ENCODE measurements at regions of chr1 and their contacts with region 1.

Region 1: DNA sequence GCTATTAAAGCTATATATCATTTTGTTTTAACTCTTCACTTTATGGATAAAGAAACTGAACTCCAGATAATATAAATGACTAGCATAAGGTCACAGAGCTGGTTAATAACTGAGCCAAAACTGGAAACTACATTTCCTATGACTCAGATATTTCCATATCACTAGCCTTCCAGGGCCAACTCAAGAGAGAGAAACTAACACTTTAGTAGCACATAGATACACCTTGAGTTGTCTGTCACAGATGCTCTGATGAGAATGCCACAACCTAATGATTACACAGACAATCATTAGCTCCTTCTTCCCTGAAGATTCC is 40.7 kb downstream of the NME7 start:
- DNase-seq: no peak
- H3K4me3 Mint-ChIP-seq: peak overlapping the region; percentile 4
- H3K27ac Mint-ChIP-seq: peak overlapping the region; percentile 13
- H3K4me1 Mint-ChIP-seq: peaks cover 11% of the 10 kb centered on the region
- H3K27me3 Mint-ChIP-seq: no peaks in the 10 kb centered on the region

Region 2: GRCh38 chr1:169161496-169162194 is 165.3 kb before region 1 on chr1:
- intact Hi-C with region 1: loop called (anchors 10 kb)
- DNase-seq: no peak
- H3K4me3 Mint-ChIP-seq: no peak overlapping the region
- H3K27ac Mint-ChIP-seq: no peak overlapping the region
- H3K4me1 Mint-ChIP-seq: peaks cover 7% of the 10 kb centered on the region
- H3K27me3 Mint-ChIP-seq: no peaks in the 10 kb centered on the region

Region 3: DNA sequence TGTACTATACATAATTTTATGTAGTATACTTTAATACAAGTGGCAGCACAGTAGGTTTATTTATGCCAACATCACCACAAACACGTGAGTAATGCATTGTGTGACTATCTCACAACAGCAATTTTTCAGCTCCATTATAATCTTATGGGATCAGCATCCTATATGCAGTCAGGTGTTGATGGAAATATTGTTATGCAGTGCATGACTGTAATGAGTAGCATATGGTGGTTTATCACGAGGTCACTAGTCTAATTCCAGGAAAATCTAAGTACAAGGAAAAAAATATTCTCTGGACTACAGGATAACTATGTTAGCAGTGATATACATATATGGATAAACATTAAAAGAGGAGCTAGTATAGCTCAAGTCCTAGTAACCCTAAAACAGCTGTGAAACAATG is 151.5 kb before region 1 on chr1:
- intact Hi-C with region 1: no loop called
- DNase-seq: no peak
- H3K4me3 Mint-ChIP-seq: no peak overlapping the region
- H3K27ac Mint-ChIP-seq: no peak overlapping the region
- H3K4me1 Mint-ChIP-seq: no peaks in the 10 kb centered on the region
- H3K27me3 Mint-ChIP-seq: no peaks in the 10 kb centered on the region

Region 4: GRCh38 chr1:169312084-169312954 is 14.6 kb before region 1 on chr1:
- intact Hi-C with region 1: loop called (anchors 1 kb)
- DNase-seq: peak; percentile 79
- H3K4me3 Mint-ChIP-seq: no peak overlapping the region
- H3K27ac Mint-ChIP-seq: peak overlapping the region; percentile 55
- H3K4me1 Mint-ChIP-seq: peaks cover 20% of the 10 kb centered on the region
- H3K27me3 Mint-ChIP-seq: no peaks in the 10 kb centered on the region

Measured in activated CD4-positive, alpha-beta T cell treated with anti-CD3 and anti-CD28 coated beads, Interleukin-2, amount 10 ng/mL, durations not matched to agents 24 days and 14 days (primary cell).